Lower leg skin (tissue), 4 donors: ENCODE measurements at regions of chr12 and their contacts with region 1.

Region 1: GRCh38 chr12:54993161-54993835 is 8.7 kb upstream of the TESPA1 start:
- DNase-seq: peak in 1 of 2 donors; percentile 38
- H3K4me3 ChIP-seq: no peak overlapping the region
- CTCF ChIP-seq: peak in 1 of 3 donors; percentile 24
- POLR2A ChIP-seq: no peak

Region 2: DNA sequence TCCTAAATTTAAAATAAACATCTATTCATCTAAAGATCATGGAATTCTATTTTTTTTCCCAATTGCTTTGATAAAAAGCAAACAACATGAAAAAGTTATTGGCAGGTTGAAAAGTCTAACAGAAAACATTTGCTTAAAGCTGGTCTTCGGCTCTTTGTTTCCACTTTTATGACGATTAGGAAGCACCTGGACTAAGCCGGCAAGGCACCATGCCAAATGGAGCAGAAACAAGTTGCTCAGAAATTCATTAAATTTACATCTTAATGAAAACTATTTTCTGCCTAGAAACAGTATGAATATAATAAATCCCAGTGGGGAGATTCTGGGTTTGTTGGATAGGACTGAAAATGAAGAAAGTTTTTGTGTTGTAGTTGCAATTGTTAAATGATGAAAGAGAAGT is 81.5 kb after region 1 on chr12:
- intact Hi-C with region 1: loop called (anchors 5 kb)
- DNase-seq: no peak
- H3K4me3 ChIP-seq: no peak overlapping the region
- CTCF ChIP-seq: no peak
- POLR2A ChIP-seq: no peak

Region 3: GRCh38 chr12:55132816-55133215 is 139.5 kb after region 1 on chr12:
- intact Hi-C with region 1: no loop called
- DNase-seq: no peak
- H3K4me3 ChIP-seq: no peak overlapping the region
- CTCF ChIP-seq: no peak
- POLR2A ChIP-seq: no peak

Region 4: GRCh38 chr12:55250944-55251343 is 257.6 kb after region 1 on chr12:
- intact Hi-C with region 1: no loop called
- DNase-seq: no peak
- H3K4me3 ChIP-seq: no peak overlapping the region
- CTCF ChIP-seq: no peak
- POLR2A ChIP-seq: no peak